ENCODE measurements at regions of chr6 and their contacts with region 1.

Region 1: DNA sequence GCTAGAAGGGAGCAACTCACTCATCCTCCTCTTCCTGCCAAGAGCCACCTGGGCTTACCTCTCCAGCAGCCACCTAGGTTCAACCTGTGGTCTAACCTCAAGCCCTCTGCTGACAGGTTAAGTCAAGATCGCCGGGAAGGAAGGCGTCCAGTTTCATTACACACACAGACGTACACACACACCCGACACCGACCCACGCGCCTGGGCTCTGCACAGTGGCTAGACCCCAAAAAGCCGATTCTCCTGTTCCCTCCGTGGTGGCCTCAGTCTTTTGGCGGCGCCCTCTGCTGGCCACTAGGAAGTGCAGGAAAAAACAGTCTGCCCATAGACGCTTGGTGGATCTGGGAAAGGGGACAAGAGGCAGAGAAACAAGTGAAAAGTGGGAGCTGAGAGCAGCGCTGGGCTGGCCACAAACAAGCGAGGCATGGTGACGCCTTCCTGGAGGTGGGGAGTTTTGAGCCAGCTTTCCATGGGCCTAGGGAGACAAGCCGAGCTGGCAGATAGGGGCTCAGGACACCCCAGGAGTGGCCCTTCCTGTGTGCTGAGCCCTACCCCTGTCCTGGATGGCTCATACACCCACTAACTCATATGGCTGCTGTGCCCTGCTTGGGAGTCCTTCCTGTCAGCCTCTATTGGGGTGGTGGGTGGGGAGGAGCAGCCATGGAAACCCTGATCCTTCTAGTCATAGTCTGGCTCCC is 52.7 kb downstream of the MRPL14 start:
- DNase-seq: peak; percentile 73
- H3K4me3 Mint-ChIP-seq: peak overlapping the region; percentile 73
- H3K27ac Mint-ChIP-seq: no peak overlapping the region
- H3K4me1 Mint-ChIP-seq: peaks cover 19% of the 10 kb centered on the region
- H3K27me3 Mint-ChIP-seq: peaks cover 3% of the 10 kb centered on the region

Region 2: GRCh38 chr6:43667245-43668150 is 407.1 kb before region 1 on chr6:
- CTCF ChIA-PET with region 1: interaction called, 18 read pairs
- intact Hi-C with region 1: loop called (anchors 1 kb)
- DNase-seq: peak; percentile 90
- H3K4me3 Mint-ChIP-seq: peak overlapping the region; percentile 5
- H3K27ac Mint-ChIP-seq: peak overlapping the region; percentile 65
- H3K4me1 Mint-ChIP-seq: peaks cover 22% of the 10 kb centered on the region
- H3K27me3 Mint-ChIP-seq: no peaks in the 10 kb centered on the region

Region 3: DNA sequence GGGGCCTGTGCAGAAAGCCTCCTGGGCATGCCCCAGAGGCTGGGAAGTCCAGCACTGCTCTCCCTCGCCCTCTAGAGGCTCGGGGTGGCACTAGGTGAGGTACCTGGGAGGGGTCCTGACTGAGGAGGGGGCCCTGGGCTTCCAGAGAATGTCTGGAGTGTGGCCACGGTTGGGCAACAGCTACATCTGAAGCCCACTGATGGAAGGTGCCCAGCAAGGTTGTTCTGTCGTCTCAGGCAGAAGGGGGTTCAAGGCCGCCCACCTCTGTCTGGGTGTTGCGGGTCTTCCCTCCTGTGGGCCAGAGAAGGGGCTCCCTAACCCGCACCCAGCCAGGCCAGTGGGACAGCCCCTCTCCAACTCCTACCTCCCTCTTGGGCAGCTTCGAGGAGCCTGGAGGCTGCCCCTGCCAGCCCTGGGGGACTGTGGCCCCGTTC is 316.0 kb before region 1 on chr6:
- CTCF ChIA-PET with region 1: interaction called, 18 read pairs
- intact Hi-C with region 1: no loop called
- DNase-seq: peak; percentile 62
- H3K4me3 Mint-ChIP-seq: no peak overlapping the region
- H3K27ac Mint-ChIP-seq: no peak overlapping the region
- H3K4me1 Mint-ChIP-seq: peaks cover 3% of the 10 kb centered on the region
- H3K27me3 Mint-ChIP-seq: no peaks in the 10 kb centered on the region

Region 4: DNA sequence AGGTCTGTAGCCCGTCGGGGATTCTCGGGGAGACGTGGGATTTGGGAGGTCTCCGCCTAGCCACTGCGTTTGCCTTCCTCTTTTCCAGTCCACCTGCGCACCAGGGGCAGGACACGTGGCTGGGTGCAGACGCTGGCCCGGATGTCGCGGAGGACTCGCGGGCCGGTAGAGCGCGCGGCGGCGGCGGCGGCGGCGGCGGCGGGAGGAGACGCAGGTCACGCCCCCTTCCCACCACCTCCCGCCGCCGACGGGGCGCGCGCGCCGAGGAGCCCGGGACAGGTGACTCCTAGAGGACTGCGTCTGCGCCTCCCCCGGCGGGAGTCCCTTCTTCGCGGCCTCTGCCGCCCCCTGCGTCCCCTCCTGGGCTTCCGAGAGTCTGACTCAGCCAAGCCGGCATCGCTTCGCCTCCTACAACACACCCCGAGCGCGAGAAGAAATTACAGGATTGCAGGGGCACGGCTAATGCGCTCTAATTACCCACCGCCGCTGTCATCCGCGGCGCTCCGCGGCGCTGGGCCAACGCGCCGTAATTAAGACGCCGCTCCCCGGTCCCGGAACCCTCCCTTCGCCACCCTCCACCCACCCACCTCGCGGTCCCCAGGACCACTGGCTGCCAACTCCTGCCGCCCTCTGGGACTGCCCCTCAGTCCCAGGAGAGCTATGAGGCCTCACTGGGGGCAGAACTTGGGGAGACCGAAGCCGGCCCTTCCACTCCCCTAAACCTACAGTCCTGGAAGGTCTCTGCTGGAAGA is 71.8 kb before region 1 on chr6:
- CTCF ChIA-PET with region 1: interaction called, 4 read pairs
- intact Hi-C with region 1: loop called (anchors 1 kb)
- DNase-seq: peak; percentile 81
- H3K4me3 Mint-ChIP-seq: peak overlapping the region; percentile 89
- H3K27ac Mint-ChIP-seq: no peak overlapping the region
- H3K4me1 Mint-ChIP-seq: peaks cover 16% of the 10 kb centered on the region
- H3K27me3 Mint-ChIP-seq: peaks cover 27% of the 10 kb centered on the region

Region 5: DNA sequence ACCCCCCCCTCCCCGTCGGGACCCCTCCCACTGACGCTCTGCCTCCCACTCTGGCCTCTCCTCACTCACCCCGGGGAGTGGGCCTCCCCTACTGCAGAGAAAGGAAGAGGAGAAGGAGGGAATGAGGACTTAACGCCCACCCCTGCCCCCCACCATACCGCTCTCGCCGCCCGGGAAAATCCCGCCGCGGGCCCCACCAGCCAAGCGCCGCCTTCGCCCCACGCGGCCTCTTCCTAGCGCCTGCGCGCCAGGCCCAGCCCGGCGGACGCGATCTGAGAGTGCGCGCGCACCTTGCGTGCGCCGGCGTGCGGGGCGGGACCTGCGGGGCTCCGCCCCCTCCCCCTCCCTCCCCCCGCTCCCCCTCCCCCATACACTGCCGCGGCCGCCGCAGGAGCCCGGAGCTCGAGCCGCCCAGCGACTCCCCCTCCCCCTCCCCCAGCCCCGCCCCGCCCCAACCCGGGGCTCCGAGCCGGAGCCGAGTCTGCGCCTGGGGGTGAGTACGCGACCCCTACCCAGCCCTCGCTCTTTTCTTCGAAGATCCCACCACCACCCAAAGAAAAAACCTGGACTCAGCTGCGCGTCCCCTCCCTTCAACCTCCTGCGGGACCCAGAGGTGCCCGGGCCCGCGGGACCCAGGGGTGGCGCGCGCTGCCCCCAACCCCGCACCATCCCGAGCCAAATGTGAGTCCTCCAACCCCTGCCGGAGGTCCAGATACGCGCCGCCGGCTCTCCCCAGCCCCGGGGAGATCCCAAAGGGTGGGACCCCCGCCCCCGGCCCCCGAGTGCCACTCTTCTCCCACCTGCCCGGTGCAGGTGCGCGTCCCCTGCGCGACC is 52.8 kb after region 1 on chr6 and contains the starts of genes MRPL14 and TMEM63B:
- CTCF ChIA-PET with region 1: no interaction called
- intact Hi-C with region 1: loop called (anchors 1 kb)
- DNase-seq: peak; percentile 86
- H3K4me3 Mint-ChIP-seq: peak within 1 kb of the TSS; percentile 88
- H3K27ac Mint-ChIP-seq: peak within 1 kb of the TSS; percentile 93
- H3K4me1 Mint-ChIP-seq: peaks cover 41% of the 10 kb centered on the region
- H3K27me3 Mint-ChIP-seq: no peaks in the 10 kb centered on the region
- total RNA-seq, gene MRPL14: 40.9 to 41.0 TPM
- total RNA-seq, gene TMEM63B: 7.8 to 8.3 TPM